ENCODE measurements at regions of chr6 and their contacts with region 1.

Region 1: DNA sequence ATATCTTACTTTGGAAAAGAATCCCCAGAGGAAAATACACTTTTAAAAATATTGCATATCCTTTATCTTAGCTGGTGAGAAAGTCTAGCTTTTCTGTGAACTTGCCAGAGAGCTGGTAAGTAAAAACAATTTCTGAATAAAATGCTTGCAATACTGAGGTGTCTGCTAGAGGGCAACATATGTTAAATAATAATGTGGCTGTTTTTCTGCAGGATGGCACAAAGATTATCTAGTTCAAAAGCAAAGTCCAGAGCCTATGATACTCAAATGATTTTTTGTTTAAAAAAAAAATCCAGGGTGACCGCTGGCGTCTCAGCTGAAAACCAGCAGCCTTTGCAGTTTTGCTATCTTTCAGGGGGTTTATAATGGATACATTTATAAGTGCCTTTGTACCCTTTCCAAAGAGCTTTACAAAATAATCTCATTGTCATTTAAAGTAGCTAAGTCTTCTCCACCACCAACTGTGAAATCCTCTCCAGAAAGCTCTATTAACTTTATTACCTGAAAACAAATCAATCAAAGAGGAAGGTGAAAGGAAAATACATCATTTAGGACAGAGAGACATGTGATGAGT is 194.9 kb downstream of the PHACTR1 start:
- DNase-seq: no peak
- ATAC-seq: no peak
- H3K4me3 ChIP-seq: no peak overlapping the region
- H3K27ac ChIP-seq: no peak overlapping the region
- H3K4me1 ChIP-seq: no peaks in the 10 kb centered on the region
- H3K27me3 ChIP-seq: no peaks in the 10 kb centered on the region

Region 2: DNA sequence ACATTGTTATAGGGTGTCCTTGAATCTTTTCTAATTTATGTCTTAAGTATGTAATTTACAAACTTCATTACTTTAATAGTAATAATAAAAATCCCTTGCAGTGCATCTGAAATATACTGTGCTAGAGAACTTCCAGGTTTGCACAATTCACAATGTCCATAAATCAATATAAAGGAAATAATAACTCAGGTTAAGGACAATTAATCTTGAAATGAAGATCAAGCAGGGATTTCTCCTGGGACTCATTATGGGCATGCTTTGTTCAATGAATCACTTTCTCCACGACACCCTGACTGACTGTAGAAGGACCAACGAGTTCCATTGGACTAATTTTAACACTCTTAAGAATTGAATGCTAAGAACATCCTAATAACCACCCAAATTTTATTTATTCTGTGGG is 84.9 kb before region 1 on chr6:
- intact Hi-C with region 1: no loop called
- DNase-seq: no peak
- ATAC-seq: no peak
- H3K4me3 ChIP-seq: no peak overlapping the region
- H3K27ac ChIP-seq: no peak overlapping the region
- H3K4me1 ChIP-seq: no peaks in the 10 kb centered on the region
- H3K27me3 ChIP-seq: no peaks in the 10 kb centered on the region

Region 3: DNA sequence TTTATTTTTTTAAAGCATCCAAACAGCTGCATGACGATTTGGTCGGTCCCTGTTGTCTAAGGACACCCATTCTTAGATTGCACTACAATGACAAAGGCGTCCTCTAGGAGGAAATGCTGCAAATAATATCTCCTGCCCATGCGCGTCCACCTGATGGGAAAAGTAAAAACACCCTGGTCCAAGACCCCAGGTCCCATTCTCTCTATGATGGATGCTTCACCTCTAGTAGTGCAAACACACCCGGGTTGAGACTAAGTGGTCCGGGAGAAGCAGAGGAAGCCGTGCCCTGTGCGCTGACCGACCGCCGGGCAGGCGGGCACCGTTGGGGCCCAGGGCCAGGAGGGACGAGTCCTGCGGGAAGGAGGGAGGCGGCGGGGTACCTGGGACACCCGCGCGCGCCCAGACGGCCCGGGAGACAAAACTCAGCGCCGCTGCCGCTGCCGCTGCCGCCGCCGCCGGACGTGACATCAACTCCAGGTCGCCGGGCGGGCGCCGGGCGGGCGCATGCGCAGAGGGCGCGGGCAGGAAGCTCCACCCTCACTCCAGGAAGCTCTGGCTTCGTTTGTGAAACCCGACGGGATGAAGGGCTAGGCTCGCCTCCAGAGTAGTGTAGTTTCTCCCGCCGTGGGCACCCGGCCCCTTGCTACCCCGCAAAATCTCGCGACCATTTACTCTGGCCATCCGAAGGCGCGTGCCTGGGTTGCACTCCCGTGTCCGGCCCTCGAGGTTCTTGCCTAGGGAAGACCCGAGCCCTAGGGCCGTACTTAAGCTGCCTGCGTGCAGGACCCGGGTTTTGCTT is 416.8 kb after region 1 on chr6 and contains the start of gene TBC1D7:
- intact Hi-C with region 1: loop called in 2 of 4 experiments (anchors 5 to 10 kb)
- DNase-seq: peak; percentile 93 to 98 (median 96)
- ATAC-seq: peak; percentile 96 to 97
- H3K4me3 ChIP-seq: peak within 1 kb of the TSS; percentile 67
- H3K27ac ChIP-seq: peak within 1 kb of the TSS; percentile 77
- H3K4me1 ChIP-seq: no peaks in the 10 kb centered on the region
- H3K27me3 ChIP-seq: no peaks in the 10 kb centered on the region
- total RNA-seq, gene TBC1D7: 21.0 to 41.8 (median 24.2) TPM

Measured in right cardiac atrium (tissue), 5 donors.